Sigmoid colon (tissue), 7 donors: ENCODE measurements at regions of chr1 and their contacts with region 1.

Region 1: DNA sequence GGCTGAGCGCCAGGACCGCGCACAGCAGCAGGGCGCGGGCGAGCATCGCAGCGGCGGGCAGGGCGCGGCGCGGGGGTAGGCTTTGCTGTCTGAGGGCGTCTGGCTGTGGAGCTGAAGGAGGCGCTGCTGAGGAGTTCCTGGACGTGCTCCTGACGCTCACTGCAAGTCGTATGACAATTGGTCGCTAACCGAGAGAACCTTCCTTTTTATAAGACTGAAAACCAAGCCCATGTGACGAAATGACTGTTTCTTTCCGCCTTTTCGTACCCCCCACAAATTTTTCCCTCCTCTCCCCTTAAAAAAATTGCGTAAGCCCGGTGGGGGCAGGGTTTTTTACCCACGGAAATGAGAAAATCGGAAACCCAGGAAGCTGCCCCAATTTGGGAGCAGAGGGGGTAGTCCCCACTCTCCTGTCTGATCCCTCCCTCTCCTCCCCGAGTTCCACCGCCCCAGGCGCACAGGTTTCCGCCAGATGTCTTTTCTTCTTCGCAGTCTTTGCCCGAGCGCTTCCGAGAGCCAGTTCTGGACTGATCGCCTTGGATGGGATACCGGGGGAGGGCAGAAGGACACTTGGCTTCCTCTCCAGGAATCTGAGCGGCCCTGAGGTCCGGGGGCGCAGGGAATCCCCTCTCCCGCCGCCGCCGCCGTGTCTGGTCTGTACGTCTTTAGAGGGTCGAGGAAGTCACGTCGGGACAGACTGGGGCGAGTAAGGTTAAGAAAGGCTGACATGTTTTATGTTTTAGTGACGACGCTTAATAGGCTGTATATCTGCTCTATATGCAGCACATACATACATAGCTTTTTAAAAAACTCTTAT is at the start of gene PTGS2:
- DNase-seq: peak; percentile 95
- H3K4me3 ChIP-seq: peak within 1 kb of the TSS; percentile 72 to 78 (median 74)
- H3K27ac ChIP-seq: peak within 1 kb of the TSS; percentile 89 to 96 (median 94)
- H3K4me1 ChIP-seq: peaks cover 0 to 55% (median 19%) of the 10 kb centered on the region in 4 donors
- H3K27me3 ChIP-seq: no peaks in the 10 kb centered on the region
- CTCF ChIP-seq: peak in 3 of 4 experiments; percentile 9 to 39 (median 35)
- EP300 ChIP-seq: peak in 2 of 4 donors; percentile 62 to 72
- POLR2A ChIP-seq: peak; percentile 83 to 87
- total RNA-seq, gene PTGS2: 16.1 to 118 (median 31.1) TPM

Region 2: GRCh38 chr1:186404454-186405051 is 275.9 kb before region 1 on chr1:
- intact Hi-C with region 1: loop called (anchors 10 kb)
- DNase-seq: no peak
- H3K4me3 ChIP-seq: no peak overlapping the region
- H3K27ac ChIP-seq: no peak overlapping the region
- H3K4me1 ChIP-seq: no peaks in the 10 kb centered on the region
- H3K27me3 ChIP-seq: no peaks in the 10 kb centered on the region
- CTCF ChIP-seq: peak in 3 of 4 experiments; percentile 45 to 54 (median 50)
- EP300 ChIP-seq: no peak
- POLR2A ChIP-seq: no peak

Region 3: GRCh38 chr1:186550832-186551231 is 129.6 kb before region 1 on chr1:
- intact Hi-C with region 1: no loop called
- DNase-seq: no peak
- H3K4me3 ChIP-seq: no peak overlapping the region
- H3K27ac ChIP-seq: no peak overlapping the region
- H3K4me1 ChIP-seq: no peaks in the 10 kb centered on the region
- H3K27me3 ChIP-seq: no peaks in the 10 kb centered on the region
- CTCF ChIP-seq: no peak
- EP300 ChIP-seq: no peak
- POLR2A ChIP-seq: no peak

Region 4: GRCh38 chr1:186605762-186606350 is 74.6 kb before region 1 on chr1:
- intact Hi-C with region 1: loop called (anchors 2 kb)
- DNase-seq: peak; percentile 69
- H3K4me3 ChIP-seq: no peak overlapping the region
- H3K27ac ChIP-seq: no peak overlapping the region
- H3K4me1 ChIP-seq: peaks cover 0 to 18% (median 10%) of the 10 kb centered on the region in 4 donors
- H3K27me3 ChIP-seq: no peaks in the 10 kb centered on the region
- CTCF ChIP-seq: peak; percentile 42 to 72 (median 54)
- EP300 ChIP-seq: no peak
- POLR2A ChIP-seq: no peak

Region 5: GRCh38 chr1:186626356-186626932 is 54.0 kb before region 1 on chr1:
- intact Hi-C with region 1: loop called (anchors 5 kb)
- DNase-seq: no peak
- H3K4me3 ChIP-seq: peak overlapping the region in 2 of 4 donors; percentile 11 to 26
- H3K27ac ChIP-seq: peak overlapping the region; percentile 6 to 84 (median 76)
- H3K4me1 ChIP-seq: peaks cover 0 to 45% (median 30%) of the 10 kb centered on the region in 4 donors
- H3K27me3 ChIP-seq: no peaks in the 10 kb centered on the region
- CTCF ChIP-seq: no peak
- EP300 ChIP-seq: no peak
- POLR2A ChIP-seq: no peak

Region 6: DNA sequence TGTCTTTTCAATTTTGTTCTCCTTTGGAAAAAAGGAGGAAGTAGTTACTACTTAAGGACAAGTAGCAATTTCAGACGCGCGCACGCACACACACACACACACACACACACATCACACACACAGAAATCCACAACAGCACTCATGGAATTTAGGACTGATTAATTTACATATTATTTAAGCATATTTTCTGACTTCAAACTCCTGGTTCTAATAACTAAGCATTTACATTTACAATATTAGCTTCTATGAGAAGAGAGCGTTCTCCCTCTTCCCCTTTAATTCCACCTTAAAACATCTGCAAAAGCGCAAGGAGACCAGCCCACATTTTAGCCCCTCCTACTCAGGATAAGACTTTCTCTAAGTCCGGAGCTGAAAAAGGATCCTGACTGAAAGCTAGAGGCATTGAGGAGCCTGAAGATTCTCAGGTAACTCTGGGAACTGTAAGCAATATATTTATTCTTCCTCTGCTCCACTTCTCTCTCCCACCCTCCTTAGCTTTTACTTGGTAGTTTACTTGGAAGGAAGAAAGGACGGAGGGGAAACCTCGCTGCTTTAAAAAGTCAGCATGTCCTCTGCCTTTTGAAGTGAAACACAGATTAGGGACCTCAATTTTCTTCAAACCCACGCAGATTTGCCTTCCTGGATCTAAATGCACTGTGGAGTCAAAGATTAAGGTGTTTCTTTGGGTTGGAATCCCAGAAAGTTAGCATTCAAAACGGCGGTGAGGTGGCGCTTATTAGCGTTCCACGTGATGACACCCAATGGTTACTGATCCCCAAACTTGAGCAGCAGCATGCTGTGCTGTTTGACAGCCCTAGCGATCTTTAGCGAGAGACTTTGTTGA is 148.4 kb after region 1 on chr1 and contains the start of gene PLA2G4A:
- intact Hi-C with region 1: loop called (anchors 2 kb)
- DNase-seq: peak; percentile 70
- H3K4me3 ChIP-seq: peak within 1 kb of the TSS; percentile 69 to 79 (median 76)
- H3K27ac ChIP-seq: peak within 1 kb of the TSS; percentile 72 to 87 (median 86)
- H3K4me1 ChIP-seq: peaks cover 0 to 28% (median 12%) of the 10 kb centered on the region in 4 donors
- H3K27me3 ChIP-seq: no peaks in the 10 kb centered on the region
- CTCF ChIP-seq: no peak
- EP300 ChIP-seq: no peak
- POLR2A ChIP-seq: no peak
- total RNA-seq, gene PLA2G4A: 17.2 to 51.0 (median 29.0) TPM

Region 7: GRCh38 chr1:186915555-186915954 is 235.1 kb after region 1 on chr1:
- intact Hi-C with region 1: loop called (anchors 5 kb)
- DNase-seq: no peak
- H3K4me3 ChIP-seq: no peak overlapping the region
- H3K27ac ChIP-seq: no peak overlapping the region
- H3K4me1 ChIP-seq: no peaks in the 10 kb centered on the region
- H3K27me3 ChIP-seq: no peaks in the 10 kb centered on the region
- CTCF ChIP-seq: no peak
- EP300 ChIP-seq: no peak
- POLR2A ChIP-seq: no peak